ENCODE measurements at regions of chr7 and their contacts with region 1.

Region 1: DNA sequence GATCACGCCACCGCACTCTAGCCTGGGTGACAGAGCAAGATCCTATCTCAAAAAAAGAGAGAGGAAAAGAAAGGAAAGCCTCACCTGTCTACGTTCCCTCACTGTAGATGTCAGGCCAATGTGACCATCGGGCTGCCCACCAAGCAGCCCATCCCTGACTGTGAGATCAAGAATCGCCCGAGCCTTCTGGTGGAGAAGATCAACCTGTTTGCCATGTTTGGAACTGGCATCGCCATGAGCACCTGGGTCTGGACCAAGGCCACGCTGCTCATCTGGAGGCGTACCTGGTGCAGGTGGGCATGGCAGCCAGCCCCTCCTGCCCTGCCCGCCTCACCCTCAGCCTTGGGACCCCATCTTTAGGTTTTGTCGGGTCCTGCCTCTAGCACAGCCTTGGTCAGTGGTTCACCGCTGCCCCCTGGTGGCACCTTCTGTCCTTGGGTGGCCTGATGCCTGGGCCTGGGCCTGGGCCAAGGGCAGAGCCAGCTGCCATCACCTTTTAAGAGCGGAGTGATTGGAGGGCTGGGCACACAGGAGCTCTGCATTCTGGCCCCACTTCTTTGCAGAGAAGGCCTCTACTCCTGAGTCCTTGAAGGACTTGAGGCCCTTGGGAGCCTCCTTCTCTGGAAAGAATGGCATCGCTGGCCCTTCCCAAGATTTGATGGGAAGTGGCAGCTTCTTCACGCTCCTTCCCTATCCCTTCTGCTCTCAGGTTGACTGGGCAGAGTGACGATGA is 14.4 kb upstream of the AHCYL2 start:
- DNase-seq: peak; percentile 69 to 89 (median 85)
- H3K4me3 ChIP-seq: no peak overlapping the region
- H3K27ac ChIP-seq: no peak overlapping the region
- H3K4me1 ChIP-seq: no peaks in the 10 kb centered on the region
- H3K27me3 ChIP-seq: no peaks in the 10 kb centered on the region
- CTCF ChIP-seq: peak; percentile 68 to 74 (median 73)
- EP300 ChIP-seq: no peak
- POLR2A ChIP-seq: no peak

Region 2: GRCh38 chr7:129163875-129164544 is 46.4 kb before region 1 on chr7:
- intact Hi-C with region 1: loop called (anchors 2 to 5 kb)
- DNase-seq: no peak
- H3K4me3 ChIP-seq: no peak overlapping the region
- H3K27ac ChIP-seq: no peak overlapping the region
- H3K4me1 ChIP-seq: peaks cover 5% of the 10 kb centered on the region
- H3K27me3 ChIP-seq: no peaks in the 10 kb centered on the region
- CTCF ChIP-seq: peak; percentile 60 to 96 (median 75)
- EP300 ChIP-seq: no peak
- POLR2A ChIP-seq: no peak

Measured in ovary (tissue), 10 donors.